GM12878 (cell line): ENCODE measurements at regions of chr11 and their contacts with region 1.

Region 1: DNA sequence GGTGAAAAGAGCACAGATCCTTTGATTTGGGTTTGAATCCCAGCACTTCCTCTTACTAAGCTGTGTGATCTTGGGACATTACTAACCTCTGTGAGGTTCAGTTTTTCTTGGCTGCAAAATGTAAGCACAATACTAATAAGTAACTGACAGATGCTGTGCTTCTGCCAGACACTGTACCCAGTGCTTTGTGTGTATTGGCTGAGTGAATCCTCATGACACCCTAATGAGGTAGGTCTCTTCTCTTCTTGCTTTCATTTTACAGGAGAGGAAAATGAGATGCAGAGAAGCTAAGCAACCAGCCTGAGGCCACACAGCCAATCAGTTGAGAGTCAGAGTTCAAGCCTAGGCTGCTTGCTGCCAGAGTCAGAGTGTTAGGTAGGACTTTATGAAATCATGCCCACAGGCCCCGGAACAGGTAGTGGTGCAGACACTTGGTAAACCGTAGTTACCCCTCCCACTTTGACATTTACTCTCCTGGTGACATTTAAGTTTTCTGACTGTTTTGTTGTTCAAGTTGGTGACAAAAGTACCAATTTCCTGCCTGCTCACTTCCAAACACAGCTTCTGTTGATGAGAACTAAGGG is 21.2 kb downstream of the PTPRJ start:
- DNase-seq: no peak
- ATAC-seq: peak; percentile 82
- H3K4me3 ChIP-seq: peak overlapping the region; percentile 37; the same call in 1 of the 2 replicates
- H3K27ac ChIP-seq: peak overlapping the region; percentile 73
- H3K4me1 ChIP-seq: peaks cover 72% of the 10 kb centered on the region
- H3K27me3 ChIP-seq: no peaks in the 10 kb centered on the region
- CTCF ChIP-seq: no peak
- EP300 ChIP-seq: no peak
- POLR2A ChIP-seq: 0 out of 2 replicates have a peak, but pooled peaks have one; percentile 17
- RAD21 ChIP-seq: no peak

Region 2: DNA sequence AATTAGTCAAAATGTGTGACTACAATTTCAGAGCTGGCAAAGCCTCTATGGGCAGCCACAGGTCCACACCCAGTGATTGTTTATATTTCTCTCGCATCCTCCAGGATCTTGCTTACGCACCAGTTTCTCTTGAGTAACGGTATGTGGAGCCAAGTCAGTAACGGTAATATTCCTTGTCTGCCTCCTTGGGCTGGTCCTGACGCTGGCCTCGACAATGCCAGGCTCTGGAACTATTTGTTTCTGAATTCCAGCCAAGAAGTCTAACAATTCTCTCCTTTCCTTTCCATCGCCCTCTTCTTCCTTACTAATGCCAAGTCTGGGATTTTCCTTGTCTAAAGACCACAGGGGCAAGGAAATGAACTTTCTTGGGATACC is 143.4 kb before region 1 on chr11:
- CTCF ChIA-PET with region 1: no interaction called
- POLR2A ChIA-PET with region 1: interaction called, 3 read pairs
- RAD21 ChIA-PET with region 1: no interaction called
- SMC1A ChIA-PET with region 1: no interaction called
- in situ Hi-C with region 1: no loop called
- intact Hi-C with region 1: loop called (anchors 10 kb)
- DNase-seq: no peak
- ATAC-seq: no peak
- H3K4me3 ChIP-seq: no peak overlapping the region
- H3K27ac ChIP-seq: peak overlapping the region; percentile 41; the same call in 1 of the 2 replicates
- H3K4me1 ChIP-seq: peaks cover 66% of the 10 kb centered on the region
- H3K27me3 ChIP-seq: no peaks in the 10 kb centered on the region
- CTCF ChIP-seq: no peak
- EP300 ChIP-seq: no peak
- POLR2A ChIP-seq: no peak
- RAD21 ChIP-seq: no peak

Region 3: DNA sequence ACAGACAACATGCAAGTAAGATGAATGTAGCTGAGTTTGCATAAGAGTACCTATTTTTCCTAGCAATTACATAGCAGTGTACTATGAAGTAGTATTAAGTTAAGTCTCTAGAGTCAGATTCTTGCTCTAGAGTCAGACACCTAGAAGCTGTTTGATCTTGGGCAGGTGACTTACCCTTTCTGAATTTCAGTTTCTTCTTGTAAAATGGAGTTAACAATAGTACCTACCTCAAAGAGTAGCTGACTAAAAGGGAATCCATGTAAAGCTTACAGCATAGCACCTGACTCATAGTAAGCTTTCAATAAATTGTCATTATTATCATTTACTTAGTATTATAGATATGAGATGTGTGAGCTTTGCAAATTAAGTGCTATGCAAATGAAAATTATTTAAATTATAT is 69.0 kb before region 1 on chr11:
- CTCF ChIA-PET with region 1: interaction called, 3 read pairs
- POLR2A ChIA-PET with region 1: no interaction called
- RAD21 ChIA-PET with region 1: no interaction called
- SMC1A ChIA-PET with region 1: interaction called, 8 read pairs
- in situ Hi-C with region 1: no loop called
- intact Hi-C with region 1: loop called (anchors 5 kb)
- DNase-seq: no peak
- ATAC-seq: peak; percentile 54; the same call in 2 of the 3 replicates
- H3K4me3 ChIP-seq: no peak overlapping the region
- H3K27ac ChIP-seq: no peak overlapping the region
- H3K4me1 ChIP-seq: peaks cover 4% of the 10 kb centered on the region
- H3K27me3 ChIP-seq: peaks cover 0 to 2% of the 10 kb centered on the region in 2 experiments; a peak in 2 of 4 replicates
- CTCF ChIP-seq: no peak
- EP300 ChIP-seq: no peak
- POLR2A ChIP-seq: no peak
- RAD21 ChIP-seq: no peak

Region 4: DNA sequence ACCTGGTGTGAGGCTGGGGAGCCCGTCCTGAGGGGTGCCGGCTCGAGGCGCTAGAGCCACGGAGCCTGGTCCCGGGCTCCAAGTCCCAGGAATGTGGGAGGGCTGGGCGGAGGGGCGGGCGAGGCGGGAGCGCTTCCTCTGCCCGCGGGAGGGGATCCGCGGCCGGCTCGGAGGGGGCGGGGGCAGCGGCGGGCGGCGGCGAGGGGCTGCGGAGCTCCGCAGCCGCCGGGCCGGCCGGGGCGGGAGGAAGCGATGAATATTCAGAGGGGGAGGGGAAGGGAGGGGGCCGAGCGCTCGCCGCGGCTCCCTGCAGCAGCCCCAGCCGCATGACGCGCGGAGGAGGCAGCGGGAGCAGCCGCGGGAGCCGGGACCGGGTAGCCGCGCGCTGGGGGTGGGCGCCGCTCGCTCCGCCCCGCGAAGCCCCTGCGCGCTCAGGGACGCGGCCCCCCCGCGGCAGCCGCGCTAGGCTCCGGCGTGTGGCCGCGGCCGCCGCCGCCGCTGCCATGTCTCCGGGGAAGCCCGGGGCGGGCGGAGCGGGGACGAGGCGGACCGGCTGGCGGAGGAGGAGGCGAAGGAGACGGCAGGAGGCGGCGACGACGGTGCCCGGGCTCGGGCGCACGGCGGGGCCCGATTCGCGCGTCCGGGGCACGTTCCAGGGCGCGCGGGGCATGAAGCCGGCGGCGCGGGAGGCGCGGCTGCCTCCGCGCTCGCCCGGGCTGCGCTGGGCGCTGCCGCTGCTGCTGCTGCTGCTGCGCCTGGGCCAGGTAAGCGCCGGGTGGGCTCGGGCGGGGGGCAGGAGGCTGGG is 21.1 kb before region 1 on chr11 and contains the start of gene PTPRJ:
- CTCF ChIA-PET with region 1: interaction called, 4 read pairs
- POLR2A ChIA-PET with region 1: interaction called, 9 read pairs
- RAD21 ChIA-PET with region 1: interaction called, 9 read pairs
- SMC1A ChIA-PET with region 1: interaction called, 23 read pairs
- in situ Hi-C with region 1: no loop called
- intact Hi-C with region 1: no loop called
- DNase-seq: no peak
- ATAC-seq: peak; percentile 75
- H3K4me3 ChIP-seq: peak within 1 kb of the TSS; percentile 96
- H3K27ac ChIP-seq: peak within 1 kb of the TSS; percentile 68
- H3K4me1 ChIP-seq: peaks cover 14% of the 10 kb centered on the region
- H3K27me3 ChIP-seq: peaks cover 0 to 3% of the 10 kb centered on the region in 2 experiments; a peak in 2 of 4 replicates
- CTCF ChIP-seq: no peak
- EP300 ChIP-seq: no peak
- POLR2A ChIP-seq: no peak; the same call in 1 of the 2 replicates
- RAD21 ChIP-seq: no peak
- polyA plus RNA-seq, gene PTPRJ: 0.77 to 0.91 TPM

Region 5: DNA sequence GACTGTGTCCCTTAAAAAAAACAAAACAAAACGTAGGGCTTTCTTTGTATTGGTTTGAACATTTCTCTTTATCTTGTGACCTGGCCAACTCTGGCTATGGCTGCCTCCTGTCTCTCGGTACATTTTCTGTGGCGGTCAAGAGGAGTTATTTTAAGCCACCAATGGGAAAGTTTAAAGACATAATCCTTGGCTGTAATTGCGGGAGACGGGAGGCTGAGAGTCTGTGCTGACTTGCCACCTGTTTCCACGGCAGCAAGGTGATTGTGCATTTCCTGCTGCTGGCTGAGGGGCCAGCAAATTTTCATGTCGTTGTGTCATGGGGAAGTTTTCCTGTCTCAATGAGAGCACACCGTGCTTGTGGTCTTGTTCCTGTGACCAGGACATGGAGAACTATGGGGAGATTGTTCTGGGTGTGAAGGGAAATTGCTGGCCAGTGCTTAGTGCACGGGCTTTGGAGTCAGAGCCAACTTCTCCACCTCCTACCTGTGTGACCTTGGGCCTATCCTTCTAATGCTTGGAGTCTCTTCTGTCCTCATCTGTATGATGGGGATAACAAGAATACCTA is 10.2 kb before region 1 on chr11:
- CTCF ChIA-PET with region 1: no interaction called
- POLR2A ChIA-PET with region 1: interaction called, 10 read pairs
- RAD21 ChIA-PET with region 1: interaction called, 5 read pairs
- SMC1A ChIA-PET with region 1: interaction called, 6 read pairs
- in situ Hi-C with region 1: no loop called
- intact Hi-C with region 1: no loop called
- DNase-seq: no peak
- ATAC-seq: no peak; the same call in 2 of the 3 replicates
- H3K4me3 ChIP-seq: peak overlapping the region; percentile 50; the same call in 1 of the 2 replicates
- H3K27ac ChIP-seq: peak overlapping the region; percentile 74
- H3K4me1 ChIP-seq: peaks cover 37% of the 10 kb centered on the region
- H3K27me3 ChIP-seq: no peaks in the 10 kb centered on the region; a peak in 1 of 4 replicates
- CTCF ChIP-seq: no peak
- EP300 ChIP-seq: no peak
- POLR2A ChIP-seq: no peak
- RAD21 ChIP-seq: no peak

Region 6: DNA sequence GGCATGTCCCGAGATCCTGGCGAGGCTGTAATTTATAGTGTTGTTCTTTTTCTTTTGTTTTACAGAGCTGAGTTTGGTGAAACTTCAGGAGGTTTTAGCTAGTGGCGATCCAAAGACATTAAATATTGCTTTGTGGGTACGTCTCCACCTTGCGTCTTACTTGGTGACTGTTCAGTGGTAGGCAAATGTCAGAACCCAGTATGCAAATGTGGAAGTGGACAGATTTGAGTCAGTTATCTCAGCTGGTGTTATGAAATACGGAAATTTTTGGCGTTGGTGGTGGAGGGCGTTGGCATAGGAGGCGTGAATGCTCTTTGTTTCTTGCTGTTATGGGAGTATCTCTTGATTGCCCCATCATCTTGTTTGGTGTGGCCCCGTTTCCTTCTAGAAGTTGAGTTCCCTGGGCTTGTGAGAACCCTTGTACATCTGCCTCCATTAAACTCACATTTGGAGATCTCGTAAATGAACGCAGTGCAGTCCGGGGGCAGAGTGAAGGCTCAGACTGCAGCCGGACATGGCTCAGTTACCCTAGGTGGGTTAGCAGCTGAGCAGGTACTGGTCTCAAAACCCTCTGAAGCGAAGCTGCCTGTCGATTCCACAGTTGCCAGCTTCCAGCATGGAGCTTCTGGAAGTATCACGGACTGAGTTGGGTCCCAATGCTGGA is 18.7 kb after region 1 on chr11:
- CTCF ChIA-PET with region 1: interaction called, 3 read pairs
- POLR2A ChIA-PET with region 1: interaction called, 10 read pairs
- RAD21 ChIA-PET with region 1: interaction called, 6 read pairs
- SMC1A ChIA-PET with region 1: interaction called, 10 read pairs
- in situ Hi-C with region 1: no loop called
- intact Hi-C with region 1: no loop called
- DNase-seq: peak; percentile 66
- ATAC-seq: peak; percentile 91
- H3K4me3 ChIP-seq: peak overlapping the region; percentile 42
- H3K27ac ChIP-seq: peak overlapping the region; percentile 88
- H3K4me1 ChIP-seq: peaks cover 66% of the 10 kb centered on the region
- H3K27me3 ChIP-seq: no peaks in the 10 kb centered on the region
- CTCF ChIP-seq: peak in 2 of 3 experiments; percentile 28 to 38; a peak in 3 of 6 replicates
- EP300 ChIP-seq: no peak
- POLR2A ChIP-seq: 0 out of 2 replicates have a peak, but pooled peaks have one; percentile 37
- RAD21 ChIP-seq: peak; percentile 65

Region 7: DNA sequence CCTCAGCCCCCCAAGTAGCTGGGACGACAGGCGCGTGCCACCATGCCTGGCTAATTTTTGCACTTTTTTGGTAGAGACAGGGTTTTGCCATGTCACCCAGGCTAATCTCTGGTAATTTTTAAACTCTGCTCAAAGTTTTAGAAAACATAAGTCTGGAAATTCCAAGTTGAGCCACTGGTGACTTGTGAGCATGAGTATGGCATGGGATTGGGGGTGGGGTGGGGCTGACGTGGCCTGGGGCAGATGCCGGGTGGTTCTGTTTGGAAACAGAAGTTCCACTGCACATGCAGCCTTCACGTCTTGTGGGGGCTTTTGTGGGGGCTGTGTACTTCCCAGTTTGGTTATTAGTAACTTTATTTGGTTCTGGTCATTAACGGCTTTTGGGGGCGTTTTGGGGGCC is 46.1 kb after region 1 on chr11:
- CTCF ChIA-PET with region 1: no interaction called
- POLR2A ChIA-PET with region 1: no interaction called
- RAD21 ChIA-PET with region 1: interaction called, 3 read pairs
- SMC1A ChIA-PET with region 1: interaction called, 4 read pairs
- in situ Hi-C with region 1: loop called (anchors 5 kb)
- intact Hi-C with region 1: no loop called
- DNase-seq: no peak
- ATAC-seq: no peak
- H3K4me3 ChIP-seq: no peak overlapping the region
- H3K27ac ChIP-seq: no peak overlapping the region
- H3K4me1 ChIP-seq: peaks cover 26% of the 10 kb centered on the region
- H3K27me3 ChIP-seq: no peaks in the 10 kb centered on the region
- CTCF ChIP-seq: no peak
- EP300 ChIP-seq: no peak
- POLR2A ChIP-seq: no peak
- RAD21 ChIP-seq: no peak

Region 8: GRCh38 chr11:48058064-48058463 is 56.5 kb after region 1 on chr11:
- CTCF ChIA-PET with region 1: no interaction called
- POLR2A ChIA-PET with region 1: no interaction called
- RAD21 ChIA-PET with region 1: no interaction called
- SMC1A ChIA-PET with region 1: no interaction called
- in situ Hi-C with region 1: no loop called
- intact Hi-C with region 1: no loop called
- DNase-seq: no peak
- ATAC-seq: peak; percentile 45; the same call in 1 of the 3 replicates
- H3K4me3 ChIP-seq: no peak overlapping the region
- H3K27ac ChIP-seq: no peak overlapping the region; the same call in 1 of the 2 replicates
- H3K4me1 ChIP-seq: peaks cover 42% of the 10 kb centered on the region
- H3K27me3 ChIP-seq: no peaks in the 10 kb centered on the region
- CTCF ChIP-seq: no peak
- EP300 ChIP-seq: no peak
- POLR2A ChIP-seq: no peak
- RAD21 ChIP-seq: no peak